Left ventricle myocardium superior (tissue), 1 donor: ENCODE measurements at regions of chr3 and their contacts with region 1.

Region 1: GRCh38 chr3:36700537-36701248 is 63.7 kb downstream of the DCLK3 start:
- DNase-seq: peak; percentile 57
- ATAC-seq: peak; percentile 64

Region 2: GRCh38 chr3:35965908-35966307 is 734.8 kb before region 1 on chr3:
- intact Hi-C with region 1: loop called (anchors 5 kb)
- DNase-seq: no peak
- ATAC-seq: no peak

Region 3: GRCh38 chr3:36804295-36805055 is 103.8 kb after region 1 on chr3:
- intact Hi-C with region 1: no loop called
- DNase-seq: no peak
- ATAC-seq: no peak

Region 4: DNA sequence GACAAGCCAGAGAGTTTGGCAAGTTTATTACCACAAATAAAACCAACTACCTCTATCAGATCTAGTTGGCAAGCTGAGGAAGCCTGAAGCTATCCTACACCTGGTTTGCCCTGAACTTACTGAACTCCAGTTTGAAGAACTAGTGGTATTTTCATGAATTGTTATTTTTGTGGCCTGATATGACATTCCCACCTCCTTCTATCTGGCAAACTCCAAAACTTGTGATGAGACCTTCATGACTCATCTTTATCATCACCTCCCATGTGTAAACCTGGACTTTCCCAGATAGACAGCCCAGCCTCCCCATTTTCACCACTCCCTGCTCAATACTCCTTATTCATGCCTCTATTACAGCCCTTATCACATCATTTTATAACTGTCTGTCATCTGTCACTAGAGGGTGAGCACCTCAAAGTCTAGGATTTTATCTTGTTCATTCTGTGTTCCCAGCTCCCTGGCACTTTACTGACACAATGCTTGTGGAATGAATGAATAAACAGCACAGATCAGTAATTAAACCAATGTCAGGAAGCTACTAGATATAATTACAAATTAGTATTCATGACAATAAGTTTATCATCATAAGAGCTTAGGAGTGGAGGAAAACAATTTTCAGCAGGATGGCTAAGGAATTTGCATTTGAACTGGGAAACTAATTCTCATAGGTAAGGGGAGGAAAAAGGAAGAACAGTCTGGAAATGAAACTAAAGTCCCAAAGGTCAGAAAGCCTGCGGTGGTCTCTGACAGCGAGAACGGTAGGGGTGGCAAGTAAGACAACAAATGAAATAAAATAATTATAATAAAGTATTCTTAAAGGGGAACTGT is 257.4 kb after region 1 on chr3:
- intact Hi-C with region 1: no loop called
- DNase-seq: no peak
- ATAC-seq: peak; percentile 15